Transverse colon (tissue), 4 donors: ENCODE measurements at regions of chrX and their contacts with region 1.

Region 1: GRCh38 chrX:109911046-109911445 is 91.9 kb upstream of the TMEM164 start:
- DNase-seq: no peak
- H3K4me3 ChIP-seq: no peak overlapping the region
- H3K27ac ChIP-seq: no peak overlapping the region
- H3K4me1 ChIP-seq: no peaks in the 10 kb centered on the region
- H3K27me3 ChIP-seq: no peaks in the 10 kb centered on the region
- CTCF ChIP-seq: peak; percentile 32 to 49 (median 37)
- EP300 ChIP-seq: no peak
- POLR2A ChIP-seq: no peak

Region 2: DNA sequence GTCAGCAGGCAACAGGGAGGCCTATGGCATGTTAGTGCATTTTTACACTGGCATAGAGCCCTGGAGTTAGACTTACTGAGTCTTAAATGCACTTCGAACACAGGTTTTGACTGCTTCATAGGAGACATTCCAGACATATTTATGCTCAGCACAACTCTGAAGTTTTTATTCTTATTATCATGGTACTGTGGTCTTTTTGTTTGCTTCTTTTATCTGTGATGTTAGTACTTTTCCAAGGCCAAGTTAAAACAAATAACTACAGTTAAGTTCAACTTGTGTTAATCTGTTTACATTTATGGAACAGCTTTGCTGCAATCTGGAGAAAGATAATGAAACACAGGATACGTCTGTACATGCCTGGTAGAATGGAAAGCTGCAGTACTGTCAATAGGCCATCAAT is 1394.9 kb before region 1 on chrX:
- in situ Hi-C with region 1: no loop called
- intact Hi-C with region 1: no loop called
- DNase-seq: no peak
- H3K4me3 ChIP-seq: no peak overlapping the region
- H3K27ac ChIP-seq: no peak overlapping the region
- H3K4me1 ChIP-seq: no peaks in the 10 kb centered on the region
- H3K27me3 ChIP-seq: no peaks in the 10 kb centered on the region
- CTCF ChIP-seq: no peak
- EP300 ChIP-seq: no peak
- POLR2A ChIP-seq: no peak

Region 3: GRCh38 chrX:109485470-109486340 is 425.3 kb before region 1 on chrX:
- in situ Hi-C with region 1: no loop called
- intact Hi-C with region 1: no loop called
- DNase-seq: peak; percentile 63
- H3K4me3 ChIP-seq: no peak overlapping the region
- H3K27ac ChIP-seq: no peak overlapping the region
- H3K4me1 ChIP-seq: no peaks in the 10 kb centered on the region
- H3K27me3 ChIP-seq: no peaks in the 10 kb centered on the region
- CTCF ChIP-seq: peak; percentile 75 to 98 (median 84)
- EP300 ChIP-seq: no peak
- POLR2A ChIP-seq: no peak

Region 4: GRCh38 chrX:110146521-110146920 is 235.5 kb after region 1 on chrX:
- in situ Hi-C with region 1: loop called (anchors 10 to 25 kb)
- intact Hi-C with region 1: no loop called
- DNase-seq: peak; percentile 35
- H3K4me3 ChIP-seq: no peak overlapping the region
- H3K27ac ChIP-seq: no peak overlapping the region
- H3K4me1 ChIP-seq: peaks cover 0 to 10% (median 0%) of the 10 kb centered on the region in 4 donors
- H3K27me3 ChIP-seq: no peaks in the 10 kb centered on the region
- CTCF ChIP-seq: peak; percentile 43 to 51 (median 48)
- EP300 ChIP-seq: no peak
- POLR2A ChIP-seq: no peak

Region 5: DNA sequence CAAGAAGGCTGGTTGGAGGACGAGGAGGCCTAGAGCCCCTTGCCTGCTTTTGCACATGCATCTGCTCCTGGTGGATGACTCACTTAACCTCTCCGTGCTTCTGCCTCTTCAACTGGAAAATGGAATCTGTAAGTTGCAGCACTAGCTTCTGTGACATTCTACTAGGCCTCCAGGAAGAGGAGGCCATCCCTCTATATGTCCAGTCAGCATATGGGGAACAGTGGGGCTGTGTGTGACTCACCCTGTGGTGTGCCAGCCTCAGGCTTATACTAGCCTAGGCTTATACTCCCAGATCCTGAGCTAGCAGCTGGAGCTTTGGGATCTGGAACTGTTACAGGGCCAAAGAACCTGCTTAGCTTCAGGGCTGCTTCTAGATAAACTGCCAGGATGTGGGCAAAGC is 483.6 kb after region 1 on chrX:
- in situ Hi-C with region 1: loop called in 1 of 4 experiments (anchors 25 kb)
- intact Hi-C with region 1: no loop called
- DNase-seq: no peak
- H3K4me3 ChIP-seq: no peak overlapping the region
- H3K27ac ChIP-seq: no peak overlapping the region
- H3K4me1 ChIP-seq: no peaks in the 10 kb centered on the region
- H3K27me3 ChIP-seq: no peaks in the 10 kb centered on the region
- CTCF ChIP-seq: no peak
- EP300 ChIP-seq: no peak
- POLR2A ChIP-seq: no peak

Region 6: GRCh38 chrX:110412971-110413721 is 502.1 kb after region 1 on chrX:
- in situ Hi-C with region 1: loop called in 2 of 4 experiments (anchors 25 kb)
- intact Hi-C with region 1: no loop called
- DNase-seq: peak; percentile 69
- H3K4me3 ChIP-seq: no peak overlapping the region
- H3K27ac ChIP-seq: no peak overlapping the region
- H3K4me1 ChIP-seq: no peaks in the 10 kb centered on the region
- H3K27me3 ChIP-seq: no peaks in the 10 kb centered on the region
- CTCF ChIP-seq: peak; percentile 58 to 85 (median 71)
- EP300 ChIP-seq: no peak
- POLR2A ChIP-seq: no peak